T-cell (primary cell): ENCODE measurements at regions of chr2 and their contacts with region 1.

Region 1: DNA sequence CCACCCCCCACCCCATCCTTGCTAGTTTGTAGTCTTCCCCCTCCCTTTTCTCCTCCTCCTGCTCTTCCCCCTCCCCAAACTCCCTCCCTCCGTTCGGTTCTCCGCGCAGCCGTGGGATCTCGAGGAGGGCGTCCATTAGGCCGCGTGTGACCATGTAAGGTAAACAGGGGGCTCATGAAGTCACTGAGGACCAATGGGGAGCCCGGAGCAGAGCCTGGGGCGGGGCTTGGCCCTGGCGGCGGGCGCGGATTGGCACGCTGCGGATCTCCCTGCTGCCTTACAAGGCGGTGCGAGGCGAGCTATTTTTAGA is 246 bp upstream of the KLF7 start:
- DNase-seq: peak; percentile 85 to 98 (median 95)
- ATAC-seq: peak; percentile 87 to 91 (median 88)
- H3K4me3 ChIP-seq: peak overlapping the region; percentile 65 to 72
- H3K4me3 Mint-ChIP-seq: peak overlapping the region; percentile 96 to 99 (median 97)
- H3K27ac ChIP-seq: peak overlapping the region; percentile 90
- H3K27ac Mint-ChIP-seq: peak overlapping the region; percentile 93 to 99
- H3K4me1 ChIP-seq: peaks cover 25 to 27% of the 10 kb centered on the region in 2 experiments
- H3K4me1 Mint-ChIP-seq: peaks cover 39 to 55% (median 47%) of the 10 kb centered on the region in 3 donors
- H3K27me3 ChIP-seq: peaks cover 0 to 19% of the 10 kb centered on the region in 2 experiments
- H3K27me3 Mint-ChIP-seq: peaks cover 0 to 21% of the 10 kb centered on the region in 2 donors

Region 2: GRCh38 chr2:207143215-207144172 is 22.5 kb before region 1 on chr2:
- CTCF ChIA-PET with region 1: interaction called, 6 to 8 read pairs
- POLR2A ChIA-PET with region 1: interaction called, 41 to 49 read pairs
- DNase-seq: peak; percentile 36 to 80 (median 61)
- ATAC-seq: peak; percentile 78 to 88 (median 84)
- H3K4me3 ChIP-seq: peak overlapping the region; percentile 32 to 61
- H3K4me3 Mint-ChIP-seq: peak overlapping the region; percentile 68 to 69 (median 68)
- H3K27ac ChIP-seq: peak overlapping the region; percentile 86
- H3K27ac Mint-ChIP-seq: peak overlapping the region; percentile 92 to 97
- H3K4me1 ChIP-seq: peaks cover 34 to 35% of the 10 kb centered on the region in 2 experiments
- H3K4me1 Mint-ChIP-seq: peaks cover 71 to 83% (median 81%) of the 10 kb centered on the region in 3 donors
- H3K27me3 ChIP-seq: no peaks in the 10 kb centered on the region
- H3K27me3 Mint-ChIP-seq: no peaks in the 10 kb centered on the region

Region 3: DNA sequence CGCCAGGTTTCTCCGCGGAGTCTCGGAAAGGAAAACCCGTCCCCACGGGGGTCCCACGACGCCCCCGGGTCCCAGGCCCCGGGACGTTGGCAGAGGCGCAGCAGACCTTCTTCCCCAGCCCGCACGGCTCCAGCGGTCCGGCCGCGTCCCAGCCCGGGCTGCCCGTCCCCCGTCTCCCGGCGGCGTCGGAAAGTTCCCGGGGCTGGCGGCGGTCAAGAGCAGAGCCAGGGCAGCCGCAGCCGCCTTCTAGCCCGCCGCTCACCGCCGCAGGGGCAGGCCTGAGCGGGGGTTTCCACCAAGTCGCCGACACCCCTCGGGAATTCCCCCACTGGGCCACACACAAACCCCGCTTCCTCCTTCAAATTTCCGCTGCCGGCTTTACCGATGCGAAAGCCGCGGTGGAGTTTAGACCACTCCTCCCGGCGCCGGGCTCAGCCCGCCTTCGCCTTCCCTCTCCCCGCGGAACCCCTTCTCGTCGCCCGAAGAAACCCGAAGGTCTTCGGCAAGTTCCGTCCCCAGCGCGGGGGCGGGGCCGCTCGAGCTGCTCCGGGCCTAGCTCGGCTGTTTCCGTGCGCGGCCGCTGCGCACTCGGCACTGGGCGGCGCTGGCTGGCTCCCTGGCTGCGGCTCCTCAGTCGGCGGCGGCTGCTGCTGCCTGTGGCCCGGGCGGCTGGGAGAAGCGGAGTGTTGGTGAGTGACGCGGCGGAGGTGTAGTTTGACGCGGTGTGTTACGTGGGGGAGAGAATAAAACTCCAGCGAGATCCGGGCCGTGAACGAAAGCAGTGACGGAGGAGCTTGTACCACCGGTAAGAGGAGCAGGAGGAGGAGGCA is 363.6 kb after region 1 on chr2 and contains the start of gene CREB1:
- CTCF ChIA-PET with region 1: interaction called in 1 of 2 experiments, 4 read pairs
- POLR2A ChIA-PET with region 1: interaction called, 3 to 13 read pairs
- DNase-seq: peak; percentile 98 to 100 (median 99)
- ATAC-seq: peak; percentile 82 to 90 (median 86)
- H3K4me3 ChIP-seq: peak within 1 kb of the TSS; percentile 83 to 100
- H3K4me3 Mint-ChIP-seq: peak within 1 kb of the TSS; percentile 84 to 100 (median 99)
- H3K27ac ChIP-seq: peak within 1 kb of the TSS; percentile 100
- H3K27ac Mint-ChIP-seq: peak within 1 kb of the TSS; percentile 100
- H3K4me1 ChIP-seq: peaks cover 40 to 58% of the 10 kb centered on the region in 2 experiments
- H3K4me1 Mint-ChIP-seq: peaks cover 55 to 69% (median 67%) of the 10 kb centered on the region in 3 donors
- H3K27me3 ChIP-seq: no peaks in the 10 kb centered on the region
- H3K27me3 Mint-ChIP-seq: no peaks in the 10 kb centered on the region
- total RNA-seq, gene CREB1: 94.0 to 118 (median 100) TPM